GM13976 (cell line): ENCODE measurements at regions of chr5 and their contacts with region 1.

Region 1: DNA sequence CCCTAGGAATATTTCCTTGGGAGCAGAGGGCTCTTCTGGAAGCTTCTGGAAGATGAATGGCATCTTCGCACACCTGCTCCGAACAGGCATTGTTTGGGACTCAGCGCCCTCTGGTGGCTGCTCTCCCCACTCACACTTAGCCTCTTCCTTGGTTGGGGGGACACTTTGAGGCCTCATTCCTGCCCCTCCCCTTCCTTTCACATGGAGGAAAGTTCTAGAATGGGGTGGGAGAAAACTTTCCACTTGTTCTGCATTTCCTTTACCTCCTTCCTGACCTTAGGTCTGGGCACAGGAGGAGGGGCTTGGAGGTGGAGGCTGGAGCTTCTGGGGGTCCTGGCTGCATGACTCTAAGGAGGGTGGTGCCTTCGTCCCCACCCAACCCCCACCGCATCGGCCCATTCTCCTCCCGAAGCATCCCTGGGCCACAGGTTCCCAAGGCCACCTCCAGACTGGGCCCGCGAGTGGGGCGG is 19.3 kb upstream of the SMIM32 start:
- DNase-seq: peak; percentile 81
- CTCF ChIP-seq: peak; percentile 88

Region 2: DNA sequence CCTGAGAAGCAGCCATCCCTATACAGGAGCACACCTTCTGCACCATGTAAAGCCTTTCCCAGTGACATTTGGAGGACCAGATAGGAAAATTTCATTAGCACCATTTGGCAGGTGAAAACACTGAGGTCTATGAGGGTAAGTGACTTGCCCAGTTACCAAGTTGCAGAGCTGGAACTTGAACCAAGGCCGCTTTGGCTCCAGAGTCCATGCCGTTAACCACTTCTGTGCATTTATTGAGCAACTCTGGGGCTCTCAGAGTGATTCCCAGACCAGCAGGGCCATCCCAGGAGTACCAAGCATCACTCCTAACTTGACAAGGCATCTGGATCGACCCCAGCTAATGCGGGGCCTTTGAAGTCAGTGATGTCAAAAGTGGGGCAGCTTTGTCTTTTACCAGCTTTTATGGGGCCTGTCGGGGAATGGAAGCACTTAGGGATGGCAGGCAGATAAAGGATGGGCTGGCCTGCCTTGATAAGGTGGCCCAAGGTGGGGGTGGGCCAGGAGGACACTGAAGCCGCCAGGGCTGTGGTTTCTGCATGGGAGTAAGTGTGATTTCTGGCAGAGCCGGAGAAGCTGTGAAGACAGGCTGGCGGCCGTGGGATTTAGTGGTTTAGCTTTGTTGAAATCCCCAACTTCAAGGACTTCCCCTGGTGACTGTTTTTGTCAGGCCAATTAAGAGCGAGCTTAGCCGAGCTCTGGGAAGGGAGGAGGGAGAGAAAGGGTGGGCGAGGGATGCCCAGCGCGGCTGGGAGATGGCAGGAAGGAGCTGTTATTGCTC is 940.6 kb before region 1 on chr5:
- in situ Hi-C with region 1: no loop called
- DNase-seq: no peak
- CTCF ChIP-seq: no peak

Region 3: GRCh38 chr5:135890867-135891266 is 321.4 kb before region 1 on chr5:
- in situ Hi-C with region 1: loop called (anchors 10 kb)
- DNase-seq: no peak
- CTCF ChIP-seq: no peak